Activated naive CD4-positive, alpha-beta T cell treated with anti-CD3 and anti-CD28 coated beads for 36 hours (primary cell): ENCODE measurements at regions of chr6 and their contacts with region 1.

Region 1: GRCh38 chr6:143806282-143807102 is 36.6 kb upstream of the LTV1 start:
- DNase-seq: peak; percentile 83
- H3K4me3 Mint-ChIP-seq: no peak overlapping the region
- H3K27ac Mint-ChIP-seq: peak overlapping the region; percentile 62
- H3K4me1 Mint-ChIP-seq: peaks cover 39% of the 10 kb centered on the region
- H3K27me3 Mint-ChIP-seq: no peaks in the 10 kb centered on the region

Region 2: GRCh38 chr6:143677891-143678791 is 128.4 kb before region 1 on chr6 and contains the start of gene PHACTR2:
- CTCF ChIA-PET with region 1: no interaction called
- intact Hi-C with region 1: loop called (anchors 5 kb)
- DNase-seq: peak; percentile 78
- H3K4me3 Mint-ChIP-seq: peak within 1 kb of the TSS; percentile 80
- H3K27ac Mint-ChIP-seq: peak within 1 kb of the TSS; percentile 36
- H3K4me1 Mint-ChIP-seq: peaks cover 12% of the 10 kb centered on the region
- H3K27me3 Mint-ChIP-seq: peaks cover 7% of the 10 kb centered on the region
- total RNA-seq, gene PHACTR2: 10.7 to 12.2 TPM

Region 3: GRCh38 chr6:143745166-143746133 is 61.0 kb before region 1 on chr6:
- CTCF ChIA-PET with region 1: no interaction called
- intact Hi-C with region 1: no loop called
- DNase-seq: no peak
- H3K4me3 Mint-ChIP-seq: no peak overlapping the region
- H3K27ac Mint-ChIP-seq: no peak overlapping the region
- H3K4me1 Mint-ChIP-seq: no peaks in the 10 kb centered on the region
- H3K27me3 Mint-ChIP-seq: no peaks in the 10 kb centered on the region